Gastrocnemius medialis (tissue), 4 donors: ENCODE measurements at regions of chr16 and their contacts with region 1.

Region 1: DNA sequence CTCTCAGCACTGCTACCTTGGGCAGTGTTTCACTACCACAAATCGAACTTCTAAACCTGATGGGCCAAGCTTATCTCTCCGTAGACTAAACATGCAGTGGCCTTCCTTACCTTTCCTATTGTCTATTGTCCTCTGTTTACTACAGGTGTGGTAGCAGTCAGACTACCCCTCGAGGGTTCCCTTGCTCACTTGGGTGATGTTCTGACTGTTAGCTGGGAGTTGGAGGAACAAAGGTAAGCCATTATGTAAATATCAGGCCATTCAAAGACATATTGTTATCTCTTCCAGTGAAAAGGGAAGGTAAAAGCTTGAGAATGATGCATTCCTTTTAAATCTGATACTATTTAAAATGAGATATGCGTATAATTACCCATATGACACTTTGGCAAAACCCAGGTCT is 828.3 kb upstream of the EEF2KMT start:
- DNase-seq: no peak
- ATAC-seq: no peak
- H3K4me3 ChIP-seq: no peak overlapping the region
- H3K27ac ChIP-seq: no peak overlapping the region
- H3K4me1 ChIP-seq: no peaks in the 10 kb centered on the region
- H3K27me3 ChIP-seq: no peaks in the 10 kb centered on the region
- CTCF ChIP-seq: no peak
- POLR2A ChIP-seq: no peak

Region 2: GRCh38 chr16:5938607-5939006 is 12.8 kb after region 1 on chr16:
- in situ Hi-C with region 1: no loop called
- intact Hi-C with region 1: loop called (anchors 2 kb)
- DNase-seq: no peak
- ATAC-seq: no peak
- H3K4me3 ChIP-seq: no peak overlapping the region
- H3K27ac ChIP-seq: no peak overlapping the region
- H3K4me1 ChIP-seq: no peaks in the 10 kb centered on the region
- H3K27me3 ChIP-seq: no peaks in the 10 kb centered on the region
- CTCF ChIP-seq: no peak
- POLR2A ChIP-seq: no peak